ENCODE measurements at regions of chr2 and their contacts with region 1.

Region 1: DNA sequence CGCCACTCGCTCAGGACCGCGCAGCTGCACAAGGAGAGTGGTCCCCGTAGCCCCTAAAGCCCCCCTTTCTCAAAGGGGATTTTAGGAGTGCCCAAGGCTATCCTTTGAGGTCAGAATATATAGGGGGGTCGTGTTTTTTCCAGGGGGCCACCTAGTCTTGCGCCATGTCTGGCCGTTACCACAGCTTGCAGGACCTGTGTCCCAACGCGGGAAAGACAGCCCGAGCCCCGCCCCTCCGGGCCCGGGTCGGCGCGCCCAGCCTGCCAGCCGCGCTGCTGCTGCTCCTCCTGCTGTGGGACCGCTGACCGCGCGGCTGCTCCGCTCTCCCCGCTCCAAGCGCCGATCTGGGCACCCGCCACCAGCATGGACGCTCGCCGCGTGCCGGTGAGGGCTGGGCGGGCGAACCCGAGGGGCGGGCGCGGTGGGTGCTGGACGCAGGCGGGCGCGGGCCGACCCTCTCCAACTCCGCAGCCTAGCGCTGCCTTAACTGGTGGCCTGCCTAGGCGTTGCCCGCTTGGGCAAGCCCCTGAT is at the start of gene CDCA7:
- DNase-seq: peak; percentile 79
- H3K4me3 Mint-ChIP-seq: peak within 1 kb of the TSS; percentile 92
- H3K27ac Mint-ChIP-seq: peak within 1 kb of the TSS; percentile 98
- H3K4me1 Mint-ChIP-seq: peaks cover 59% of the 10 kb centered on the region
- H3K27me3 Mint-ChIP-seq: peaks cover 8% of the 10 kb centered on the region
- total RNA-seq, gene CDCA7: 128 and 129 TPM in 2 replicates

Region 2: DNA sequence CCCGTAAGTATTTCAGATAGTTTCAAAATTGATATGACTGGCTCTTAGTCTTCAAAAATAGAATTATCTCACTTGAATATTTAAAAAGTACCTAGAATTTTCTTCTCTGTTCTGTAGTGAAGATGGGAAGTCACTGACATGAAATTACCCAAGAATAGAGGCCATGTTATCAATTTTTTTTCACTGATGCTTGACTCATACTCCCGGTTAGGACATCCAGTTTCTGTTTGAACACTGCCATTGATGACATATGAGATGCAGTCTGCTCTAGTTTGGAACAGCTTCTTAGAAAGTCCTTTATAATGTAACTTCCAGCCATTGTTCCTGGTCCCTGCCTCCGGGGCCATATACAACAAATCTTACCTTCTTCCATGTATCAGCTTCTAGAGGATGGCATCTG is 253.0 kb before region 1 on chr2:
- intact Hi-C with region 1: loop called (anchors 1 kb)
- DNase-seq: no peak
- H3K4me3 Mint-ChIP-seq: no peak overlapping the region
- H3K27ac Mint-ChIP-seq: peak overlapping the region; percentile 38
- H3K4me1 Mint-ChIP-seq: peaks cover 51% of the 10 kb centered on the region
- H3K27me3 Mint-ChIP-seq: no peaks in the 10 kb centered on the region

Region 3: DNA sequence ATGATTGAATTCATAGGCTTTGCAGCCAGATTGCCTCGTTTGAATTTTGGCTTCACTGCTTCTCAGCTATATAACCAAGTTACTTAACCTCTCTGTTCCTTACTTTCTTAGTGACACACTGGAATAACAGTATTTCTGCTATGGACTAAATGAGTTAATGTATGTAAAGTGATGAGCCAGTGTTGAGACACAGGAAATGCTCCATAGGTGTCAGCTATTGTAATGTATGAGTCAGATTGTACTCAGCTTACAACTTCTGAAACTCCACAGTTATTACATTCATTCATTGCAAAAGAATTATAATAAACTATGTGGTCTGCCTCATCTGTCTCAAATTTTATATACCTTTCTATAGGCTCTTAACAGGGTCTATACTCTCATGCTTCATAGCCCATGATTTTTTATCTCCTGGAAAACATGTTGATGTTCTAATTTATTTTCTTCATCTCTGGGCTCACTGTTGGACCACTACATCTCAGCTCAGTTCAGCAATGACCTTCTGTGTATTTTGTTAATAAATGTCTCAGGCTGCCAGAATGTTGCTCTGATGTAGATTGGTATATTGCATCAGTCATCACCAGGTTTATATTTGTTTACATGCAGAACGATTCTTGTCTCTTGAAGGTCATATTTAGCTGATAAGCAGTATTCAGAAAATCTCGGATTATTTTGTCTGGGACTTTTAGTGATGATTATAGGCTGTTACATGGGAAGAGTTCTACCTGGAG is 202.8 kb before region 1 on chr2:
- intact Hi-C with region 1: loop called (anchors 2 kb)
- DNase-seq: no peak
- H3K4me3 Mint-ChIP-seq: no peak overlapping the region
- H3K27ac Mint-ChIP-seq: peak overlapping the region; percentile 41
- H3K4me1 Mint-ChIP-seq: peaks cover 54% of the 10 kb centered on the region
- H3K27me3 Mint-ChIP-seq: no peaks in the 10 kb centered on the region

Region 4: DNA sequence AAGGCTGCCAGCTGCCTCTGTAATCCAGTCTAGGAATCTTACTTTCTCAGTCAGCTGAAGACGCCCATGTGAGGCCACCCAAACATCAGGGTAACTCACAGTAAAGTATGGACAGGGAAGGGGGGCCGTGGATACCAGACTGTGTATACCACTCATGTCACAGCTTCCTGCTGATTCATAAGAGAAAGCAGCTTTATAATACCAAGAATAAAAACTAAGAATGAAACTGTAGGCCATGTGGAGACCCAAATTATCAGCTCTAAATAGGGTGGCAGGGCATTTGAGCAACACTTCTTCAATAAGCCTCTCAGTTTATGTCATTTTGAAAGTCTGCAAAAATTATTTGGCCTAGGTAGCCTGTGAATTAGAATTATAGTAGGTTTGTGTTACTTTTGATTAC is 115.0 kb before region 1 on chr2:
- intact Hi-C with region 1: loop called (anchors 1 kb)
- DNase-seq: peak; percentile 14
- H3K4me3 Mint-ChIP-seq: no peak overlapping the region
- H3K27ac Mint-ChIP-seq: no peak overlapping the region
- H3K4me1 Mint-ChIP-seq: peaks cover 17% of the 10 kb centered on the region
- H3K27me3 Mint-ChIP-seq: peaks cover 21% of the 10 kb centered on the region

Region 5: GRCh38 chr2:173286153-173286809 is 68.4 kb before region 1 on chr2:
- intact Hi-C with region 1: loop called (anchors 1 kb)
- DNase-seq: no peak
- H3K4me3 Mint-ChIP-seq: no peak overlapping the region
- H3K27ac Mint-ChIP-seq: peak overlapping the region; percentile 35
- H3K4me1 Mint-ChIP-seq: peaks cover 19% of the 10 kb centered on the region
- H3K27me3 Mint-ChIP-seq: peaks cover 2% of the 10 kb centered on the region

Region 6: DNA sequence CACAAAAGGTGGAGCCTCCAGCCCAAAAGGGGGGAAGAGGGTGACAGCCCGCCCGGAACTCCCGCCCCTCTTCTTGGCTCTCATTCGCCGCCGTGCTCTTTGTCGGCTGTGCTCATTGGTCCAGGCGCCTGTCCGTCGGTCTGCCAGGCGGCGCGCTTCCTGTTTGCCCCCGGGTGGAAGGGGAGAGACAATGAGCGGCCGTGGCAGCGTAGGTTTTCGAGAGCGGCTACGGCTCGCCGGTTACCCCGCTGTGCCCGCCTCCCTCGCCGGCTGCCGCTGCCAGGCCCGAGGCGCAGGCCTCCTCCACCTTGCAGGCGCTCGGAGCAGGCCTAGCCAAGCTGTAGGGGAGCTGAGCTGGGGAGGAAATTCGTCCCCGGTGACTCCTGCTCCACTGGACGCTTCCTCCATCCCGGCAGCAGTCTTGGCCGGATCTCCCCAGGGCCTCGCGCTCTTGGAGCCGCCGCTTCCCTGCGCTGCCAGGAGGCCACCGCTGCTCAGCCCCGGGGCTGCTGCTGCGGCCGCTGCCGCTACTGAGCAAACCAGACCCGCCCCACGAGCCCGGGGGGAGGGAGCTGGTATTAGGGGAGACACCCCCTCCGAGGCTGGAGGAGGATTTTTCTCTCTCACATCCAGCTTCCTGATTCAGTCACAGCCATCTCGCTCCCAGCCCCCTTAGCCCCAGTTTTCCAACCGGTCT is 610.8 kb after region 1 on chr2 and contains the start of gene SP3:
- intact Hi-C with region 1: loop called (anchors 2 kb)
- DNase-seq: peak; percentile 95
- H3K4me3 Mint-ChIP-seq: peak within 1 kb of the TSS; percentile 86
- H3K27ac Mint-ChIP-seq: peak within 1 kb of the TSS; percentile 92
- H3K4me1 Mint-ChIP-seq: peaks cover 32% of the 10 kb centered on the region
- H3K27me3 Mint-ChIP-seq: no peaks in the 10 kb centered on the region
- total RNA-seq, gene SP3: 104 and 105 TPM in 2 replicates

Region 7: GRCh38 chr2:174487108-174487819 is 1132.6 kb after region 1 on chr2:
- intact Hi-C with region 1: loop called (anchors 5 kb)
- DNase-seq: peak; percentile 85
- H3K4me3 Mint-ChIP-seq: peak overlapping the region; percentile 87
- H3K27ac Mint-ChIP-seq: peak overlapping the region; percentile 79
- H3K4me1 Mint-ChIP-seq: peaks cover 52% of the 10 kb centered on the region
- H3K27me3 Mint-ChIP-seq: peaks cover 7% of the 10 kb centered on the region